HepG2 (cell line): ENCODE measurements at regions of chr1 and their contacts with region 1.

Region 1: GRCh38 chr1:107559881-107560280 is 405.1 kb downstream of the VAV3 start:
- DNase-seq: no peak
- ATAC-seq: no peak
- H3K4me3 ChIP-seq: no peak overlapping the region
- H3K27ac ChIP-seq: no peak overlapping the region
- H3K4me1 ChIP-seq: no peaks in the 10 kb centered on the region
- H3K27me3 ChIP-seq: 0 out of 5 replicates have a peak, but pooled peaks cover 0 to 3% of the 10 kb centered on the region in 2 experiments
- CTCF ChIP-seq: no peak
- EP300 ChIP-seq: no peak
- POLR2A ChIP-seq: no peak
- RAD21 ChIP-seq: no peak

Region 2: DNA sequence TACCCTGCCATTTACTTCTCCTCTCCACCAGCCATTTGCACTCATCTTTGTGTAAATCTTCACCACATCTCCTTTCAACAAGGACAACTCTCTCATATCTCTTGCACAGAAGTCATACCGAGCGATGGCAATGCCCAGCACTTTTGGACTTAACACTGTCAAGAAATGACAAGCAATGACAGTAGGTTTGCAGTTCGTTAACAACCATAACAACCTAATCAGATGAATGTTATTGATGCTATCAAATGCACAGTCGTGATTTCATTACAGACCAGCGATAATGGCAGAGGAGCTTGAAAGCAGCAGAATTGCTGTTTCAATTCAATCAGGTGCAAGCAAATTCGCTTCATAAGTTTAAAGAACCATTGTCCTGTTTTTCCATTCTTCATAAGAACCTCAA is 14.2 kb after region 1 on chr1:
- CTCF ChIA-PET with region 1: no interaction called
- POLR2A ChIA-PET with region 1: no interaction called
- in situ Hi-C with region 1: no loop called
- intact Hi-C with region 1: loop called (anchors 1 kb)
- DNase-seq: no peak
- ATAC-seq: no peak
- H3K4me3 ChIP-seq: no peak overlapping the region
- H3K27ac ChIP-seq: no peak overlapping the region
- H3K4me1 ChIP-seq: no peaks in the 10 kb centered on the region
- H3K27me3 ChIP-seq: no peaks in the 10 kb centered on the region; a peak in 1 of 5 replicates
- CTCF ChIP-seq: no peak
- EP300 ChIP-seq: no peak
- POLR2A ChIP-seq: no peak
- RAD21 ChIP-seq: no peak